ENCODE measurements at regions of chr19 and their contacts with region 1.

Region 1: GRCh38 chr19:46392243-46392801 is 21.0 kb downstream of the CCDC8 start:
- DNase-seq: no peak
- ATAC-seq: no peak
- H3K4me3 ChIP-seq: no peak overlapping the region
- H3K27ac ChIP-seq: no peak overlapping the region
- H3K4me1 ChIP-seq: peaks cover 4 to 11% of the 10 kb centered on the region in 2 experiments; a peak in 1 of 4 replicates
- H3K27me3 ChIP-seq: no peaks in the 10 kb centered on the region
- CTCF ChIP-seq: no peak
- POLR2A ChIP-seq: no peak
- RAD21 ChIP-seq: no peak

Region 2: GRCh38 chr19:45834970-45835369 is 557.4 kb before region 1 on chr19:
- CTCF ChIA-PET with region 1: no interaction called
- POLR2A ChIA-PET with region 1: no interaction called
- RAD21 ChIA-PET with region 1: no interaction called
- intact Hi-C with region 1: no loop called
- DNase-seq: no peak
- ATAC-seq: no peak
- H3K4me3 ChIP-seq: no peak overlapping the region
- H3K27ac ChIP-seq: no peak overlapping the region
- H3K4me1 ChIP-seq: no peaks in the 10 kb centered on the region
- H3K27me3 ChIP-seq: no peaks in the 10 kb centered on the region
- CTCF ChIP-seq: no peak
- POLR2A ChIP-seq: no peak
- RAD21 ChIP-seq: no peak

Region 3: DNA sequence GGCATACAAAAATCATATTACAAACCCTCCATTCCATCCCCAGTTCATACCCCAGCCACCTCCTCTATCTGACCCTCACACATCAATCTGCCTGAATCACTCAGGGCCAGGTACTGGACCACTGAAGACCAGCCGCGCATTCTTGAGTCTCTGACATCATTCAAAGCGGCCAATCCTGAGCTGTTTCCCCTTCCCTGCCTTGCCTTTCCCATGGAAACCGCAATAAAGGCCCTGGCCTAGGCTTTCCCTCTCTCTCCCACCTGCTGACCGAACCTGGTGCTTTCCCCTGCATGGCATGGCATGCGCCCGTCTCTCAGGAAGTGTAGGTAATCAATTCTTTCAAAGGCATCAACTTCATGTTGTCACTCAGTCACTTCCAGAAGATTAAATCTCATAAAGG is 113.1 kb before region 1 on chr19:
- CTCF ChIA-PET with region 1: interaction called, 16 read pairs
- POLR2A ChIA-PET with region 1: no interaction called
- RAD21 ChIA-PET with region 1: no interaction called
- intact Hi-C with region 1: loop called (anchors 2 kb)
- DNase-seq: no peak
- ATAC-seq: no peak
- H3K4me3 ChIP-seq: no peak overlapping the region
- H3K27ac ChIP-seq: no peak overlapping the region
- H3K4me1 ChIP-seq: no peaks in the 10 kb centered on the region
- H3K27me3 ChIP-seq: no peaks in the 10 kb centered on the region
- CTCF ChIP-seq: no peak
- POLR2A ChIP-seq: no peak
- RAD21 ChIP-seq: no peak

Region 4: GRCh38 chr19:46378268-46378667 is 14.1 kb before region 1 on chr19:
- CTCF ChIA-PET with region 1: no interaction called
- POLR2A ChIA-PET with region 1: no interaction called
- RAD21 ChIA-PET with region 1: no interaction called
- intact Hi-C with region 1: no loop called
- DNase-seq: no peak
- ATAC-seq: no peak
- H3K4me3 ChIP-seq: no peak overlapping the region
- H3K27ac ChIP-seq: no peak overlapping the region
- H3K4me1 ChIP-seq: peaks cover 9 to 11% of the 10 kb centered on the region in 2 experiments; a peak in 3 of 4 replicates
- H3K27me3 ChIP-seq: no peaks in the 10 kb centered on the region
- CTCF ChIP-seq: no peak
- POLR2A ChIP-seq: no peak
- RAD21 ChIP-seq: no peak

Region 5: DNA sequence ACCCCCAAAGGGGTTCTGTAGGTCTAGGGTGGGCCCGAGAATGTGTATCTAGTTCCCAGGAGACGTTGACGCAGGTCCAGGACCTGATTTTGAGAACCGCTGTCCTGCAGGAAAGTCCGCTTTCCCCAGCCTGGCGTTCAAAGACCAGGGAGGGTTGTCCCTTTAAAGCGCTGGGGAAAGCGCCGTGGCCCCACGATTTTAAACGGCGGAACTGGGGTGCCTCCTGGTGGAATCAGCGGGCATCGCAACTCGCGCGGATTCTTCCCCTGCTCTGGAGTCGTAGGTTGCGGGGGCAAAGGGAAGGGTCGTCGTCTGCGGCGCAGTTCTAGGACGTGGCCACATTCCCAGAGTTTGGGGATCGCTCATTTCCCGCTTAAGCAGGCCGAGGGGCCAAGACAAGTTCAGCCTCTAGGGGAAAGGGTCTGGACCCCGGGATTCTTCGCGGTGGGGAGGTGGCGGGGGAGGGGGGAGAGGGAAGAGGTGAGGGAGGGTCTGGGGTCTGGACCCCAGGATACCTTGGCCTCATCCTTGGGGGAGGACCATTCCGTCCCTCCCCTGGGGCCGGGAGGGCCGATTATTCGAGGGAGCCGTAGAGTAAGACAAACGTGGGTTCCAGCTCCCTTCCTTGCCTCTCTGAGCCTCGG is 95.6 kb after region 1 on chr19:
- CTCF ChIA-PET with region 1: interaction called, 16 read pairs
- POLR2A ChIA-PET with region 1: no interaction called
- RAD21 ChIA-PET with region 1: no interaction called
- intact Hi-C with region 1: loop called (anchors 1 kb)
- DNase-seq: peak; percentile 29
- ATAC-seq: peak; percentile 92
- H3K4me3 ChIP-seq: no peak overlapping the region; a peak in 1 of 4 replicates
- H3K27ac ChIP-seq: no peak overlapping the region
- H3K4me1 ChIP-seq: no peaks in the 10 kb centered on the region
- H3K27me3 ChIP-seq: no peaks in the 10 kb centered on the region
- CTCF ChIP-seq: peak; percentile 92 to 98 (median 95)
- POLR2A ChIP-seq: no peak
- RAD21 ChIP-seq: peak; percentile 98

Measured in HCT116 (cell line).